ENCODE measurements at regions of chr1 and their contacts with region 1.

Region 1: DNA sequence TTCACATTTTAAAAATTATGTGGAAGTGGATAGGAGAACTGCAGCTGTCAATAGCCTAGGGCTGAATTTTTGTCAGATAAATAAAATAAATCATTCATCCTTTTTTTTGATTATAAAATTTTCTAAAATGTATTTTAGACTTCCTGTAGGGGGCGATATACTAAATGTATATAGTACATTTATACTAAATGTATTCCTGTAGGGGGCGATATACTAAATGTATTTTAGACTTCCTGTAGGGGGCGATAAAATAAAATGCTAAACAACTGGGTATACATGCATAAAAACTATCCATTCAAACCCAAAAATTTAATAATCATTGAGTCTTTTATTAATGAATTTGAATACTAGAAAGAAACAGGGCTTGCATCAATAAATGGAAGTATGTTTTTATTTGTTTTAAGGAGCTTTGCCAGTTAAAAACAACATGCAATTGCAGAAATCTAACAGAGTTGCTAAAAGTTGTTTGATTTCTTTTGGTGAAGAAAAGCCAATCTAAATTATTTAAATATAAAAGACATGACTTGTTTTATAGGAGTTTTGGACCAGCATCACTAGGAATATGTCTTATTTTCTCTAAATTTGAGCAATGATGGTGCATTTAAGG is 31.4 kb downstream of the CLCA1 start:
- DNase-seq: no peak
- H3K4me3 ChIP-seq: no peak overlapping the region
- H3K4me3 Mint-ChIP-seq: no peak overlapping the region
- H3K27ac Mint-ChIP-seq: no peak overlapping the region
- H3K4me1 ChIP-seq: peaks cover 10% of the 10 kb centered on the region; the same call in 1 of the 2 replicates
- H3K4me1 Mint-ChIP-seq: no peaks in the 10 kb centered on the region
- H3K27me3 ChIP-seq: no peaks in the 10 kb centered on the region
- H3K27me3 Mint-ChIP-seq: no peaks in the 10 kb centered on the region
- CTCF ChIP-seq: peak; percentile 74

Region 2: GRCh38 chr1:85576642-85577418 is 923.3 kb before region 1 on chr1:
- CTCF ChIA-PET with region 1: no interaction called
- POLR2A ChIA-PET with region 1: no interaction called
- intact Hi-C with region 1: no loop called
- DNase-seq: peak; percentile 76 to 88
- H3K4me3 ChIP-seq: peak overlapping the region; percentile 75
- H3K4me3 Mint-ChIP-seq: peak overlapping the region; percentile 81
- H3K27ac Mint-ChIP-seq: peak overlapping the region; percentile 90
- H3K4me1 ChIP-seq: peaks cover 40% of the 10 kb centered on the region
- H3K4me1 Mint-ChIP-seq: peaks cover 14% of the 10 kb centered on the region
- H3K27me3 ChIP-seq: no peaks in the 10 kb centered on the region
- H3K27me3 Mint-ChIP-seq: no peaks in the 10 kb centered on the region
- CTCF ChIP-seq: peak; percentile 35 to 61

Region 3: DNA sequence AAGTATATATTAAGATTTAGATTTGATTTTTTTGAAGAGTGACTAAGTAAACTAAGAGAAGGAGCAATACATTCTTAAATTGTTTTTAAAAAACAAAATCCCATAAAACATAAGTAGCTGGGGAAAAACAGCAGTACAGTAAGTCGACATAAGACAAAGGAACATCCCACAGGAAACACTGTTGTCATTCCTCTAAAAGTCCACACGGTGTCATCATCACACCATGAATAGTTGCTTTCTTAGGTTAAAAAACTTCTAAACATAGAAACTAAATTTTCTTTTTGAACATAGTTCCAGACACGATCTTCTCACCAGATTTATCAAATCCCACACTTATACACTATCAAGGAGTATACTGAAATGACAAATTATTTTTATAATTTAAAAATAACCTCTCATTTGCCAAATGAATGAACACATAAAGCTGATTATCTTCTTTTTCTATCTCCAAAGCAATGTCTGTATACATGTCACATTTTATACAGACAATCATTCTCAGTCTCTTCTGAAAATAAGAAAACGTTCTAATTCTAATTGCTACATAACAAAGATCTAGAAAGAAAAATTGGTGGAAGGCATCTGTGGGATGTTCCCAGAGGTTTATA is 119.7 kb before region 1 on chr1:
- CTCF ChIA-PET with region 1: interaction called, 3 read pairs
- POLR2A ChIA-PET with region 1: no interaction called
- intact Hi-C with region 1: loop called (anchors 1 kb)
- DNase-seq: peak in 1 of 2 experiments; percentile 4
- H3K4me3 ChIP-seq: no peak overlapping the region
- H3K4me3 Mint-ChIP-seq: no peak overlapping the region
- H3K27ac Mint-ChIP-seq: no peak overlapping the region
- H3K4me1 ChIP-seq: no peaks in the 10 kb centered on the region
- H3K4me1 Mint-ChIP-seq: no peaks in the 10 kb centered on the region
- H3K27me3 ChIP-seq: no peaks in the 10 kb centered on the region
- H3K27me3 Mint-ChIP-seq: no peaks in the 10 kb centered on the region
- CTCF ChIP-seq: peak; percentile 47 to 52

Region 4: GRCh38 chr1:86409416-86410021 is 90.6 kb before region 1 on chr1:
- CTCF ChIA-PET with region 1: no interaction called
- POLR2A ChIA-PET with region 1: no interaction called
- intact Hi-C with region 1: no loop called
- DNase-seq: no peak
- H3K4me3 ChIP-seq: no peak overlapping the region
- H3K4me3 Mint-ChIP-seq: no peak overlapping the region
- H3K27ac Mint-ChIP-seq: no peak overlapping the region
- H3K4me1 ChIP-seq: no peaks in the 10 kb centered on the region
- H3K4me1 Mint-ChIP-seq: no peaks in the 10 kb centered on the region
- H3K27me3 ChIP-seq: no peaks in the 10 kb centered on the region; the same call in 1 of the 2 replicates
- H3K27me3 Mint-ChIP-seq: no peaks in the 10 kb centered on the region
- CTCF ChIP-seq: no peak

Region 5: DNA sequence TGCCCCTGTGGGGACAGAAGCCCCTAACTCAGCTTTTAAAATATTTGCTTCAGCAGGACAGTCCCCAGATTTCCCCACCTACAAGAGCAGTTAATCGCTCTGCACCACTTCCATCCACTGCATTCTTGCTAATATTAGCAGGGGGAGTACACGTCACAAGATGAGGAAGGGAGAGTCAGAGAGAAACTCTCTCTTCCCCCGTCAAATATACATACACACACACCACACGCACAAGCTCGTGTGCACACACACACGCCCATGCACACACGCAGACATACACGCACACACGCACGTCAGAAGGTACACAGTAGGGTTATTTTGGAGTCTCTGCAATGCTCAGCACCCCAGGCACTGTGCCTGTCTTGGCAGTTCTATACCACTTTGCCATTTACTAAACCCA is 29.2 kb before region 1 on chr1:
- CTCF ChIA-PET with region 1: no interaction called
- POLR2A ChIA-PET with region 1: no interaction called
- intact Hi-C with region 1: loop called (anchors 1 kb)
- DNase-seq: no peak
- H3K4me3 ChIP-seq: no peak overlapping the region
- H3K4me3 Mint-ChIP-seq: no peak overlapping the region
- H3K27ac Mint-ChIP-seq: no peak overlapping the region
- H3K4me1 ChIP-seq: no peaks in the 10 kb centered on the region
- H3K4me1 Mint-ChIP-seq: no peaks in the 10 kb centered on the region
- H3K27me3 ChIP-seq: no peaks in the 10 kb centered on the region
- H3K27me3 Mint-ChIP-seq: peaks cover 3% of the 10 kb centered on the region
- CTCF ChIP-seq: no peak

Region 6: GRCh38 chr1:86527306-86527705 is 27.2 kb after region 1 on chr1:
- CTCF ChIA-PET with region 1: no interaction called
- POLR2A ChIA-PET with region 1: no interaction called
- intact Hi-C with region 1: no loop called
- DNase-seq: no peak
- H3K4me3 ChIP-seq: no peak overlapping the region
- H3K4me3 Mint-ChIP-seq: no peak overlapping the region
- H3K27ac Mint-ChIP-seq: no peak overlapping the region
- H3K4me1 ChIP-seq: peaks cover 5% of the 10 kb centered on the region; the same call in 1 of the 2 replicates
- H3K4me1 Mint-ChIP-seq: no peaks in the 10 kb centered on the region
- H3K27me3 ChIP-seq: no peaks in the 10 kb centered on the region
- H3K27me3 Mint-ChIP-seq: no peaks in the 10 kb centered on the region
- CTCF ChIP-seq: no peak

Region 7: GRCh38 chr1:86650065-86650464 is 150.0 kb after region 1 on chr1:
- CTCF ChIA-PET with region 1: no interaction called
- POLR2A ChIA-PET with region 1: no interaction called
- intact Hi-C with region 1: loop called (anchors 1 kb)
- DNase-seq: peak in 1 of 2 experiments; percentile 9
- H3K4me3 ChIP-seq: no peak overlapping the region
- H3K4me3 Mint-ChIP-seq: no peak overlapping the region
- H3K27ac Mint-ChIP-seq: no peak overlapping the region
- H3K4me1 ChIP-seq: no peaks in the 10 kb centered on the region
- H3K4me1 Mint-ChIP-seq: peaks cover 4% of the 10 kb centered on the region
- H3K27me3 ChIP-seq: no peaks in the 10 kb centered on the region
- H3K27me3 Mint-ChIP-seq: no peaks in the 10 kb centered on the region
- CTCF ChIP-seq: peak in 1 of 2 experiments; percentile 17

Region 8: GRCh38 chr1:86965012-86965826 is 465.1 kb after region 1 on chr1:
- CTCF ChIA-PET with region 1: no interaction called
- POLR2A ChIA-PET with region 1: no interaction called
- intact Hi-C with region 1: loop called (anchors 5 kb)
- DNase-seq: peak in 1 of 2 experiments; percentile 50
- H3K4me3 ChIP-seq: no peak overlapping the region
- H3K4me3 Mint-ChIP-seq: no peak overlapping the region
- H3K27ac Mint-ChIP-seq: no peak overlapping the region
- H3K4me1 ChIP-seq: peaks cover 13% of the 10 kb centered on the region; the same call in 1 of the 2 replicates
- H3K4me1 Mint-ChIP-seq: no peaks in the 10 kb centered on the region
- H3K27me3 ChIP-seq: no peaks in the 10 kb centered on the region
- H3K27me3 Mint-ChIP-seq: no peaks in the 10 kb centered on the region
- CTCF ChIP-seq: peak; percentile 31 to 53

Measured in Caco-2 (cell line).